ENCODE measurements at regions of chr20 and their contacts with region 1.

Region 1: DNA sequence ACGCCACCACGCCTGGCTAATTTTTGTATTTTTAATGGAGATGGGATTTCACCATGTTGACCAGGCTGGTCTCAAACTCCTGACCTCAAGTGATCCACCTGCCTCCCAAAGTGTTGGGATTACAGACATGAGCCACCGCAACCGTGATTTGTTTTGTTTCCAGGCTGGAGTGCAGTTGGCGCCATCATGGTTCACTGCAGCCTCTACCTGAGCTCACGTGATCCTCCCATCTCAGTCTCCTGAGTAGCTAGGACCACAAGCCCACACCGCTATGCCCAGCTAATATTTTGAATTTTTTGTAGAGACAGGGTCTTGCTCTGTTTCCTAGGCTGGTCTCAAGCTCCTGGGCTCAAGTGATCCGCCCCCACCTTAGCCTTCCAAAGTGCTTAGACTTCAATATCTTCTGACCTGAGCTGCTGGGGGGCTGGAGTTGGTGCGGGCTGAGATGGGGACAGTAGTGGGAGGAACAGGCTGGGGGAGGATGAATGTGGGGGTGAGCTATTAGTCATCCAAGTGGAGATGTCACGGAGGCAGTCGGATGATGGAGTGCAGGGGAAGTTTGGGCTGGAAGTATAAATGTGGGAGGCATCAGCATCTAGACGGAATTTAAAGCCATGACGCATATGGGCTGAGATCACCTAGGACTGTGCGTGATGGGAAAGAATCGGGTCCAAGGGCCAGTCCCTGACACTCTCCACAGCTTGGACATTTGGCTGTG is 23.1 kb upstream of the ZMYND8 start:
- DNase-seq: no peak
- H3K4me3 ChIP-seq: no peak overlapping the region
- H3K27ac ChIP-seq: no peak overlapping the region
- H3K4me1 ChIP-seq: peaks cover 16% of the 10 kb centered on the region
- H3K27me3 ChIP-seq: no peaks in the 10 kb centered on the region
- CTCF ChIP-seq: no peak

Region 2: DNA sequence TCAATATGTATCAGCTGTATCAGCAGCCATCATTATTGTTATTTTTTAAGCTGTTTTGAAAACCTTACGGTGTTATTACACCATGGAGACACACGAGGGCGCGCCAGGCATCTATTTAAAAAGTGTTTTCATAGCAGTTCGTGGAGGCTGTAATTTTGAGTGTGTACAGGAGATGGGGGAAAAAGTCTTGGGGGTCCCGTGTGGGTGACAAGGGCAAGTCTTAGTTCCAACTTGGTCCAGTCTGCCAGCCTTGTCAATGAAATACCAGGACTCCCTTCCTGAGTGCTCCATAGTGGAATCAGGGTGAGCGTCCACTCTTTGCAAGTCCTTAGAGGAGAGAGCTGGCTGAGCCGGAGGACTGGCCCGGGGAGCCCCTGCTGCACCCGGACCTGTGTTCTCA is 626.9 kb before region 1 on chr20:
- CTCF ChIA-PET with region 1: interaction called, 4 read pairs
- dilution Hi-C with region 1: no loop called
- in situ Hi-C with region 1: loop called (anchors 10 kb)
- intact Hi-C with region 1: loop called (anchors 1 kb)
- DNase-seq: peak; percentile 16
- H3K4me3 ChIP-seq: no peak overlapping the region
- H3K27ac ChIP-seq: no peak overlapping the region
- H3K4me1 ChIP-seq: peaks cover under 1% of the 10 kb centered on the region
- H3K27me3 ChIP-seq: no peaks in the 10 kb centered on the region
- CTCF ChIP-seq: peak; percentile 69 to 78

Region 3: DNA sequence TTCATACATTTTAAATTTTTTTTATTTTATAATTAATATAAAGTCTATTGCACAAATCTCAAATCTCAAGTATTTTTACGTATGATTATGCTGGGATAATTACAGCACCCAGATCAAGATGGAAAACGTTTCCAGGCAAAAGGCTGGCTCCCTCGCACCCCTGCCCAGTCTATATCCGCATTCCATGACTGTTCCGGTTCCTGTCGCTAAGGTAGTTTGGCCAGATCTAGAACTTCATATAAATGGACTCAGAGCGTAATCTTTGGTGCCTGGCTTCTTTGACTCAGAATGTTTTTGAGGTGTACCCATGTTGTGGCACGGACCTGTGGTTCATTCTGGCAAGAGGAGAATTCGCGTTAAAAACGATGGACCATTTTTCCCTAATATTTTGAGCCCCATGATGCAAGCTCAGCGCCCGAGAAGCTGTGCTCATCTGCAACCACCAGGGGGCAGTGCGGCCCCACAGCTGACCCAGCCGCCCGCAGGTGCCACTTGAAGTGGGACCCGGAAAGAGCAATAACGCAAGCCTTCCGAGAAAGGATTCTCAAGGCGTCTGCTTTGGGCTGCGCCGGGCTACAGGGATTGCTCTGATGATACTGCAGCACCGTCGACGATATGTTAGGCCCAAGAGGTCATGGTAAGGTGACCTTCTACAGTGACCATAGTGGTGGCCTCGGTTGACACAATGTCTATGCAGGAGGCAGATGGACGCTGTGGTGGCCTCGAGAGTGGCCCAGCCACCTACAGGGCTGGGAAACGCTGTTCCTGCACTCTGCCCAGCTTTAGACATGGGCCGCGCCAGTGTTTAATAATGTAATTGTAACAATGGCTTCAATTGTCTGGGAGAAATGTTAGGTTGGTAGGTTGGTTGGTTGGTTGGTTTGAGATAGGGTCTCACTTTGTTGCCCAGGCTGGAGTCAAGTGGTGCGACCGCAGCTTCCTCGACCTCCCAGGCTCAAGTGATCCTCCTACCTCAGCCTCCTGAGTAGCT is 183.2 kb before region 1 on chr20:
- CTCF ChIA-PET with region 1: interaction called, 10 read pairs
- dilution Hi-C with region 1: no loop called
- in situ Hi-C with region 1: loop called (anchors 5 kb)
- intact Hi-C with region 1: loop called (anchors 1 kb)
- DNase-seq: peak; percentile 47
- H3K4me3 ChIP-seq: no peak overlapping the region
- H3K27ac ChIP-seq: no peak overlapping the region
- H3K4me1 ChIP-seq: peaks cover 10% of the 10 kb centered on the region
- H3K27me3 ChIP-seq: no peaks in the 10 kb centered on the region
- CTCF ChIP-seq: peak; percentile 86 to 96

Region 4: DNA sequence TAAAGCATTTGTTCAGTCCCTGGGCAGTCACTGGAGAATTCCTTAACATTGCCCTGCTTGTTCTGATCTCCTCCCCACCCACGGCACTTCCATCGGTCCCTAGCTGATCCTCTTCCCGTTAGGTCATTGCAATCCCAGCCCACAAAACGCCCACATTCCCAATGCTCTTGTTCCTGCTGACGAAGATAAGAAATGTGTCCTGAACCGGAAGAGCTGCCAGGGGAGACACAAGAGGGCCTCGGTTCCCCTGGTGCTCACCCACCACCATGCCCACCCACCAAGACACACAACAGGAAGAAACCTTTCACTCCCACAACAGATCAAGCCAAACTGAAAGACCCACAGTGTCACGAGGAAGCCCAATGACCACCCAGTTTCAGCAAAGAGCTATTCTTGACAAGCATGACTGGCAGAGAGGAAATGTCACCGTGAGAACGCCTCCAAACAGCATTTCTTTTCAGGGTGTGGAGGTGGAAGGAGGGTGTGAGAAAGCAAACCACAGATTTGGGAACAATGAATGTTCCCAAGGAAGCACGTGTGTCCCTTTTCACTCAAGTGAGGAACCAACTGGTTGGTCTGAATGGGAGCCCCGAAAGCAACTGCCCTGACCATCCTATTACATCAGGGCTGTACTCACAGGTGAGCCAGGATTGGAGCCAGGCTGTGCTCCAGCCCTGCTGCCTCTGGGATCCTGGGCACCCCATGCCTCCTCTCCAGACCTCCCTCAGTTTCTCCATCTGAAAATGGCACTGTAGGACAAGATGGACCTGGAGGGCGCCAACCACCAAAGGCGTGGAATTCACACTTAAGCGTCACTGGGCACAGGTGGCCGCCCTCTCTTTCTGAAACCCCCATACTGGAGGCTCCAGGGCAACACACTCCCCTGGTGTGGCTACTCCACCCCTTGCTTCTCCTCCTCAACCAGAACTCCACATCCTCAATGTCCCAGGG is 120.6 kb before region 1 on chr20:
- CTCF ChIA-PET with region 1: interaction called, 11 read pairs
- dilution Hi-C with region 1: no loop called
- in situ Hi-C with region 1: no loop called
- intact Hi-C with region 1: no loop called
- DNase-seq: peak; percentile 77
- H3K4me3 ChIP-seq: no peak overlapping the region
- H3K27ac ChIP-seq: peak overlapping the region; percentile 59
- H3K4me1 ChIP-seq: peaks cover 18% of the 10 kb centered on the region
- H3K27me3 ChIP-seq: no peaks in the 10 kb centered on the region
- CTCF ChIP-seq: no peak

Region 5: DNA sequence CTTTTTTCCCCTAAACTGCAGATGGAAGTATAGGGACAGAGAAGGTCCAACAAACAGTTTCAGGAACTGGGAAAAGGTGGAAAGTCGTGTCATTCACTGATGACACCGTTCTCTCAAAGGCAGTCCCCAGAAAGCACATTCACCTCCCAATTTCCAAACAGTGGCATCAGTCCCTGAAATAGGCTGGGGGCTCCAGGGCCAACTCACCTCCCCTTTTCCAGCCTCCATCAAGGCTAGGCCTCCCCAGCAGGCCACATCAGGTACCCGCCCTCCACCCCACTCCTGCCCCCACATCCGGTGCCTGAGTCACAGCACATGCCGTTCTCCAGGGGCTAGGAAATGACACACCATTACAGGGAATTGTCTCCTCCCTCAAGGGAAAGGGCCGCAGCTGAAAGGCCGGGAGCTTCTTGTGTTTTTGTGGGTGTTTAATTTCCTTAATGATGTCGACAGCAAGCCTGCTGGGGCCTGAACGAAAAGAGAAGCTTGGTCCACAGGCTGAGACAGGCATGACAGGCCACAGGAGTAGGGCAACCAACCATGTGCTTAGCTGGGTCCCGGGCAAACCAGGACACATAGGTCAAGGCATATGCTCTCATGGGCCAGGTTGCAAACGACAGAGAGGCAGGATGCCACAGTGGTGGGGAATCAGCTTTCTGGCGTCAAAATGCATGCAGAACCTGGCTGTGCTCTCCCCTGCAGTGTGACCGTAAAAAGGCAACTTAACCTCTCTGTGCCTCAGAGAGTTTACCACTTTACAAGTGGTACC is 62.3 kb before region 1 on chr20:
- CTCF ChIA-PET with region 1: interaction called, 8 read pairs
- dilution Hi-C with region 1: no loop called
- in situ Hi-C with region 1: no loop called
- intact Hi-C with region 1: loop called (anchors 1 kb)
- DNase-seq: peak; percentile 100
- H3K4me3 ChIP-seq: no peak overlapping the region
- H3K27ac ChIP-seq: peak overlapping the region; percentile 95
- H3K4me1 ChIP-seq: peaks cover 69% of the 10 kb centered on the region
- H3K27me3 ChIP-seq: no peaks in the 10 kb centered on the region
- CTCF ChIP-seq: no peak

Region 6: GRCh38 chr20:47336129-47336835 is 43.3 kb before region 1 on chr20:
- CTCF ChIA-PET with region 1: no interaction called
- dilution Hi-C with region 1: no loop called
- in situ Hi-C with region 1: no loop called
- intact Hi-C with region 1: no loop called
- DNase-seq: peak; percentile 83
- H3K4me3 ChIP-seq: no peak overlapping the region
- H3K27ac ChIP-seq: peak overlapping the region; percentile 81
- H3K4me1 ChIP-seq: peaks cover 51% of the 10 kb centered on the region
- H3K27me3 ChIP-seq: no peaks in the 10 kb centered on the region
- CTCF ChIP-seq: no peak

Region 7: DNA sequence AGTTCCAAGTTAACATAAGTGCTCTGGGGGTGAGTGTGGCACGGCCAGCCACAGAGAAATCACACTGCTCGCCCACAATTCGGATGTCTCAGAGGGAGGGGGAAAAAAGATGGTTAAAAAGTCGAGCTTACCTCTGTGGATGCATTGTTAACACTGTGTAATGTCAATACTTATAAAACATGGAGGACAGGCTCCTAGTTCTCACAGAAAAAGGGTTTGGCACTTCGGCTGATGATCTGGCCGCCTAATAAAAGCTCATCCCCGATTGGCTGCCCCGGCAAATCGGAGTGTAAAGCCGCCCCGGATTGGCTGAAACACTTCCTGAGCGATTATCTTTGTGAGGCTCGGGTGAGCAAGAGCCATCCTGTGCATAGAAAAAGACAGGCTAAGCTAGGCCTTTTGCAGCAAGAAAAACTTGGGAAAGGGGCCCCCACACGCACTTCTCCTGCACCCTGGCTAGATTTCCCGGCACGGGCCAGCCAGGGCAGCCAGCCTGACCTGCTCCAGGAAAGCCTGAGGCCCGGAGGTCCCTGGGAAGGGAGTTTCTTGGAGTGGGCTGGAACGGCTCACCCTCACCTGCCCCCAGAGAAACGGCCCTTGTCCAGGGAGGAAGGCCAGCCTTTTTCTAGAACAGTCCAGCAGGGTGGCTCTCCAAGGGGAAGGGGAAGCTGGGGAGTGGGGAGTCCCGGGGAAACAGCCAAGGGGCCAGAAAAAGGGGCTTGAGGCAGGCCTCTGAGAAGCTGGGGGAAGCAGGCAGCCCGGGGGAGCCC is 22.9 kb before region 1 on chr20 and contains the start of gene ZMYND8:
- CTCF ChIA-PET with region 1: interaction called, 18 read pairs
- dilution Hi-C with region 1: no loop called
- in situ Hi-C with region 1: no loop called
- intact Hi-C with region 1: loop called (anchors 2 kb)
- DNase-seq: peak; percentile 95
- H3K4me3 ChIP-seq: peak within 1 kb of the TSS; percentile 36 to 46 (median 45)
- H3K27ac ChIP-seq: peak within 1 kb of the TSS; percentile 94
- H3K4me1 ChIP-seq: peaks cover 98% of the 10 kb centered on the region
- H3K27me3 ChIP-seq: no peaks in the 10 kb centered on the region
- CTCF ChIP-seq: no peak
- total RNA-seq, gene ZMYND8: 18.7 to 59.6 TPM

Region 8: GRCh38 chr20:47432211-47433210 is 52.9 kb after region 1 on chr20:
- CTCF ChIA-PET with region 1: no interaction called
- dilution Hi-C with region 1: no loop called
- in situ Hi-C with region 1: no loop called
- intact Hi-C with region 1: no loop called
- DNase-seq: peak; percentile 59
- H3K4me3 ChIP-seq: no peak overlapping the region
- H3K27ac ChIP-seq: no peak overlapping the region
- H3K4me1 ChIP-seq: peaks cover 3% of the 10 kb centered on the region
- H3K27me3 ChIP-seq: no peaks in the 10 kb centered on the region
- CTCF ChIP-seq: no peak

Region 9: GRCh38 chr20:47453142-47453782 is 73.7 kb after region 1 on chr20:
- CTCF ChIA-PET with region 1: no interaction called
- dilution Hi-C with region 1: no loop called
- in situ Hi-C with region 1: no loop called
- intact Hi-C with region 1: no loop called
- DNase-seq: peak; percentile 95
- H3K4me3 ChIP-seq: no peak overlapping the region
- H3K27ac ChIP-seq: peak overlapping the region; percentile 99
- H3K4me1 ChIP-seq: peaks cover 35% of the 10 kb centered on the region
- H3K27me3 ChIP-seq: no peaks in the 10 kb centered on the region
- CTCF ChIP-seq: no peak

Measured in mammary epithelial cell (primary cell).